Activated T-helper 2 cell treated with anti-CD3 and anti-CD28 coated beads, Interferon-gamma antibody, Interleukin-2, Interleukin-4, amounts not matched to agents 10 μg/mL and 5 μg/mL and 100 μg/mL, durations not matched to agents 14 hours and 24 hours and 36 hours (primary cell): ENCODE measurements at regions of chr2 and their contacts with region 1.

Region 1: GRCh38 chr2:28621172-28622100 is 125.6 kb downstream of the PLB1 start:
- DNase-seq: peak; percentile 74
- H3K4me3 Mint-ChIP-seq: peak overlapping the region; percentile 52
- H3K27ac Mint-ChIP-seq: peak overlapping the region; percentile 96
- H3K4me1 Mint-ChIP-seq: peaks cover 89% of the 10 kb centered on the region
- H3K27me3 Mint-ChIP-seq: no peaks in the 10 kb centered on the region

Region 2: GRCh38 chr2:28445448-28446258 is 175.8 kb before region 1 on chr2:
- intact Hi-C with region 1: loop called (anchors 10 kb)
- DNase-seq: no peak
- H3K4me3 Mint-ChIP-seq: peak overlapping the region; percentile 17
- H3K27ac Mint-ChIP-seq: peak overlapping the region; percentile 74
- H3K4me1 Mint-ChIP-seq: peaks cover 67% of the 10 kb centered on the region
- H3K27me3 Mint-ChIP-seq: no peaks in the 10 kb centered on the region

Region 3: GRCh38 chr2:28583899-28584553 is 37.4 kb before region 1 on chr2:
- intact Hi-C with region 1: loop called (anchors 5 kb)
- DNase-seq: peak; percentile 36
- H3K4me3 Mint-ChIP-seq: no peak overlapping the region
- H3K27ac Mint-ChIP-seq: peak overlapping the region; percentile 72
- H3K4me1 Mint-ChIP-seq: peaks cover 43% of the 10 kb centered on the region
- H3K27me3 Mint-ChIP-seq: no peaks in the 10 kb centered on the region

Region 4: GRCh38 chr2:28610583-28611201 is 10.7 kb before region 1 on chr2:
- intact Hi-C with region 1: loop called (anchors 1 kb)
- DNase-seq: no peak
- H3K4me3 Mint-ChIP-seq: no peak overlapping the region
- H3K27ac Mint-ChIP-seq: peak overlapping the region; percentile 10
- H3K4me1 Mint-ChIP-seq: peaks cover 21% of the 10 kb centered on the region
- H3K27me3 Mint-ChIP-seq: no peaks in the 10 kb centered on the region

Region 5: GRCh38 chr2:28751252-28751955 is 130.0 kb after region 1 on chr2 and contains the start of gene PPP1CB:
- intact Hi-C with region 1: loop called (anchors 2 kb)
- DNase-seq: peak; percentile 97
- H3K4me3 Mint-ChIP-seq: peak within 1 kb of the TSS; percentile 90
- H3K27ac Mint-ChIP-seq: peak within 1 kb of the TSS; percentile 96
- H3K4me1 Mint-ChIP-seq: peaks cover 44% of the 10 kb centered on the region
- H3K27me3 Mint-ChIP-seq: no peaks in the 10 kb centered on the region
- total RNA-seq, gene PPP1CB: 253 and 272 TPM in 2 replicates